ENCODE measurements at regions of chr4 and their contacts with region 1.

Region 1: DNA sequence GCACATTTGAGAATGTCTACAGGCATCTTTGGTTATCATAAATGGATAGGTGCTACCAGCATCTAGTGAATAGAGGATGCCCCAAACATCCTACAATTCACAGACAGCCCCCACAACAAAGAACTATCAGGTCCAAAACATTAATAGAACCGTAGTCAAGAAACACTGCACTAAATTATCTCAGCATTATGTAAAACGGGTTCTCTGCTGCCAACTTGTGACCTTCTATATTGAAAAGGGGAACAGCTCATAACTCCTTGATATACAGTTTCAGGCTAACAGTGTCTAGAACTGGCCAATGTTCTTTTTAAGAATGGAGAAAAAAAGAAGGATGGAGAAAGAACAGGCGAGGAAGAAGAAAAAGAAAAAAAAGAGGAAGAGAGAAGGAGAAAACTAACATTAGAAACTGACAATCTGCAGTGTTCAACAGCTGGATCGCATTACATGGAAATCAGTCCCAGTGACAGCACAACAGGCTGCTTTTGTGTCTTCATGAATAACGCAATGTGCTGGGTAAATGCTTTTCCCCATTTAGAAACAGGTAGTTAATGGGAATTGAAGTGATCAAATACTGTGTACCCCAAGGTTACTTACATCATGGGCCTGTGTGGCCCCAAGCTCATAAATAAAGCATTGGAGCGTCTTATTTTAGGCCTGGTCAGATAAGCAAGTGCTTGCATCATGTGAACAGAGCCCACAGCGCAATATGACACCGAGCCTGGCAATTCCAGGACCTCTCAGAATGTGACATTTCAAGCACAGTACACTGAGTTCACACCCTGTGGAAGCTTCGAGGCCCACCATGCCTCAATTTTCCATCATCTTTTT is 339.5 kb downstream of the DHX15 start:
- DNase-seq: peak; percentile 60 to 89 (median 76)
- ATAC-seq: peak; percentile 94 to 96 (median 96)
- H3K4me3 ChIP-seq: no peak overlapping the region
- H3K27ac ChIP-seq: peak overlapping the region; percentile 56 to 94 (median 82)
- H3K4me1 ChIP-seq: peaks cover 5 to 71% (median 32%) of the 10 kb centered on the region in 12 donors
- H3K27me3 ChIP-seq: no peaks in the 10 kb centered on the region
- CTCF ChIP-seq: no peak
- POLR2A ChIP-seq: no peak

Region 2: DNA sequence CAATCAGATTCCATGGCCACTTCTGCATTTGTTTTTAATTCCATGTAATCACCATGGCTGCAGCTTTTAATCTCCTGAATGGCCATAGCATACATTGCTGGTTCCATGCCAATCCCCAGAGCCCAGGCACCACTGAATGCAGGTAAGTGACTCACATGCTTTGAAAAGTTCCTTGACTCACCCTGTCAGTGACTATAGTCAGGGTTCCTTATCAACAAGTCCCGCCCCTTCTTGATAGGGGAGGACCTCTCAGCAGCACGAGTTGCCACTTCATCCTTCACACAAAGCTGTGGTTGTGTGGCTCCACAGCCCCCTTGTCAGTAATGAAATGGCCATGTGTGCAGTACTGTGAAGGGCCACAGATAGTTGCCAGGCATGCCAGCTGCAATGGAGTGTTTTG is 871.6 kb before region 1 on chr4:
- intact Hi-C with region 1: loop called in 1 of 10 experiments (anchors 5 kb)
- DNase-seq: peak; percentile 56 to 79 (median 67)
- ATAC-seq: peak; percentile 92 to 94 (median 93)
- H3K4me3 ChIP-seq: no peak overlapping the region
- H3K27ac ChIP-seq: peak overlapping the region; percentile 2 to 86 (median 72)
- H3K4me1 ChIP-seq: peaks cover 0 to 39% (median 4%) of the 10 kb centered on the region in 12 donors
- H3K27me3 ChIP-seq: no peaks in the 10 kb centered on the region
- CTCF ChIP-seq: no peak
- POLR2A ChIP-seq: no peak

Region 3: GRCh38 chr4:23889814-23890341 is 355.0 kb before region 1 on chr4 and contains the start of gene PPARGC1A:
- intact Hi-C with region 1: loop called in 2 of 10 experiments (anchors 5 to 10 kb)
- DNase-seq: peak in 4 of 5 donors; percentile 73 to 82 (median 78)
- ATAC-seq: peak; percentile 91 to 95 (median 94)
- H3K4me3 ChIP-seq: peak within 1 kb of the TSS; percentile 39 to 73 (median 58)
- H3K27ac ChIP-seq: peak within 1 kb of the TSS; percentile 80 to 94 (median 86)
- H3K4me1 ChIP-seq: peaks cover 0 to 14% (median under 1%) of the 10 kb centered on the region in 12 donors
- H3K27me3 ChIP-seq: no peaks in the 10 kb centered on the region
- CTCF ChIP-seq: no peak
- POLR2A ChIP-seq: peak in 1 of 2 donors; percentile 84
- total RNA-seq, gene PPARGC1A: 47.2 to 103 (median 84.4) TPM

Region 4: GRCh38 chr4:24274381-24274941 is 29.6 kb after region 1 on chr4:
- intact Hi-C with region 1: no loop called
- DNase-seq: no peak
- ATAC-seq: no peak
- H3K4me3 ChIP-seq: no peak overlapping the region
- H3K27ac ChIP-seq: no peak overlapping the region
- H3K4me1 ChIP-seq: peaks cover 0 to 5% (median 0%) of the 10 kb centered on the region in 12 donors
- H3K27me3 ChIP-seq: no peaks in the 10 kb centered on the region
- CTCF ChIP-seq: no peak
- POLR2A ChIP-seq: no peak